PC-3 (cell line): ENCODE measurements at regions of chr10 and their contacts with region 1.

Region 1: GRCh38 chr10:77970869-77971803 is 44.6 kb upstream of the DLG5 start:
- DNase-seq: peak; percentile 99
- ATAC-seq: peak; percentile 89
- H3K4me3 ChIP-seq: no peak overlapping the region
- H3K27ac ChIP-seq: peak overlapping the region; percentile 53
- H3K4me1 ChIP-seq: peaks cover 14% of the 10 kb centered on the region
- H3K27me3 ChIP-seq: no peaks in the 10 kb centered on the region
- CTCF ChIP-seq: no peak

Region 2: GRCh38 chr10:77889277-77889903 is 81.7 kb before region 1 on chr10:
- CTCF ChIA-PET with region 1: interaction called, 17 read pairs
- POLR2A ChIA-PET with region 1: no interaction called
- intact Hi-C with region 1: no loop called
- DNase-seq: peak; percentile 100
- ATAC-seq: peak; percentile 94
- H3K4me3 ChIP-seq: no peak overlapping the region
- H3K27ac ChIP-seq: peak overlapping the region; percentile 71
- H3K4me1 ChIP-seq: peaks cover 30% of the 10 kb centered on the region
- H3K27me3 ChIP-seq: no peaks in the 10 kb centered on the region
- CTCF ChIP-seq: no peak

Region 3: DNA sequence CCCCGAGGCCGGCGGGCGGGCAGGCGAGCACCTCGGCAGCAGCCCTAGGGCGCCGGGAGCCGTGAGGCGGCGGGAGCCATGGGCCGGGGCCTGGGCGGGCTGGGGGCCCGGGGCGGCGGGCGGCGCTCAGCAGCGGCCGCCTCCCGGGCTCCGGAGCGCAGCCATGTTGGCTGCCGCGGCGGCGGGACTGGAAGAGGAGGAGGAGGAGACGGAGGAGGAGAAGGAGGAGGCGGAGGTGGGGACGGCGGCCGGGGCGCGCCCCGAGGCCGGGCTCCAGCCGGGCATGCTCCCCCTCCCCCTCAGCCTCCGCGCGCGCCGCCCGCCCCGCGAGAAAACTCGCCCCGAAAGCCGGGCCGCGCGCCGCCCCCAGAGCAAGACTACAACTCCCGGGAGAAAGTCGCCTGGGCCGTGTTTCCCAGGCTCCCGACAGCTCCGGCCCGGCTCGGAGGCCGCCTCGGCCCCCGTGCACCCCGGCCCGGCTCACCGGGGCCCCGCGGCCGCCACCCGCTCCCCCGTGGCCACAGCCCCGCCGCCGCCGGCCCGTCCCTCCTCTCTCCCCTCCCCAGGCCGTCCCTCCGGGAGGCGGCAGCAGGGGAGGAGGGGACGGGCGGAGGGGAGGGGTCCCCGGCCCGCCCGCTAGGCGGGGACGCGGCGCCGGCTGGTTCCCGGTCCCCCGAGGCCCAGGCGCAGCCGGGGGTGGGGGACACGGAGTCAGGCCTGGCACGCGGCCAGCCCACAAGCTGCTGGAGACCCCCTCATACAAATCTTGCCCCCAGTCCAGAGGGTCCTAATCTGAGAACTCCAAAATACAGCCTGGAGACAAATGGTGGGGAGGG is 44.4 kb before region 1 on chr10 and contains the start of gene DLG5:
- CTCF ChIA-PET with region 1: interaction called, 11 read pairs
- POLR2A ChIA-PET with region 1: interaction called, 6 read pairs
- intact Hi-C with region 1: loop called (anchors 2 kb)
- DNase-seq: peak; percentile 89
- ATAC-seq: peak; percentile 77
- H3K4me3 ChIP-seq: peak within 1 kb of the TSS; percentile 74
- H3K27ac ChIP-seq: no peak within 1 kb of the TSS
- H3K4me1 ChIP-seq: peaks cover 39% of the 10 kb centered on the region
- H3K27me3 ChIP-seq: no peaks in the 10 kb centered on the region
- CTCF ChIP-seq: peak; percentile 34; the same call in 1 of the 2 replicates
- total RNA-seq, gene DLG5: 118 and 158 TPM in 2 replicates

Region 4: DNA sequence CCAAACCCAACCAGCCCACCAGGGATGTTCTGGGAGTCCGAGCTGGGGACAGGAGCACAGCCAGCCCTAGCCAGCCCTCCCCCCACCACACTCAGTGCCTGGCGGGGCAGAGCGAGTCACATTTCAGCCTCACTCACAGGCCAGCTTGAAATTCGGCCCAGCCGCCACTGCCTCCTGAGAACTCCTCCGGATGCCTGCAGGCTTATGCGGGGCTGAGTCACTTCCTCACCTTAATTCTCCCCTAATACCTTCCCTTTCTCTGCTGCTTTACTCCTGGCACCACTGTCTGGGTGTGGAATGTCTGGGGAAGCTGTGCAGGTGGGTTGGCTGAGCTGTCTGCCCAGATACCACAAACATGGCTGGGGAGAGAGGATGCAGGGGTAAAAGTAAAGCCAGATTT is 22.0 kb before region 1 on chr10:
- CTCF ChIA-PET with region 1: interaction called, 8 read pairs
- POLR2A ChIA-PET with region 1: interaction called, 7 read pairs
- intact Hi-C with region 1: loop called (anchors 1 kb)
- DNase-seq: peak; percentile 100
- ATAC-seq: peak; percentile 94
- H3K4me3 ChIP-seq: peak overlapping the region; percentile 3; the same call in 1 of the 2 replicates
- H3K27ac ChIP-seq: peak overlapping the region; percentile 69
- H3K4me1 ChIP-seq: peaks cover 36% of the 10 kb centered on the region
- H3K27me3 ChIP-seq: no peaks in the 10 kb centered on the region
- CTCF ChIP-seq: no peak

Region 5: GRCh38 chr10:77989081-77989724 is 18.1 kb after region 1 on chr10:
- CTCF ChIA-PET with region 1: interaction called, 7 read pairs
- POLR2A ChIA-PET with region 1: interaction called, 3 read pairs
- intact Hi-C with region 1: loop called (anchors 1 kb)
- DNase-seq: peak; percentile 86
- ATAC-seq: peak; percentile 82
- H3K4me3 ChIP-seq: no peak overlapping the region
- H3K27ac ChIP-seq: no peak overlapping the region
- H3K4me1 ChIP-seq: peaks cover 22% of the 10 kb centered on the region
- H3K27me3 ChIP-seq: no peaks in the 10 kb centered on the region
- CTCF ChIP-seq: no peak

Region 6: GRCh38 chr10:78830062-78830975 is 859.2 kb after region 1 on chr10:
- CTCF ChIA-PET with region 1: no interaction called
- POLR2A ChIA-PET with region 1: no interaction called
- intact Hi-C with region 1: no loop called
- DNase-seq: peak; percentile 99
- ATAC-seq: peak; percentile 83
- H3K4me3 ChIP-seq: no peak overlapping the region
- H3K27ac ChIP-seq: peak overlapping the region; percentile 6
- H3K4me1 ChIP-seq: peaks cover 21% of the 10 kb centered on the region
- H3K27me3 ChIP-seq: peaks cover 5% of the 10 kb centered on the region; the same call in 1 of the 2 replicates
- CTCF ChIP-seq: no peak